T-cell (primary cell): ENCODE measurements at regions of chr17 and their contacts with region 1.

Region 1: DNA sequence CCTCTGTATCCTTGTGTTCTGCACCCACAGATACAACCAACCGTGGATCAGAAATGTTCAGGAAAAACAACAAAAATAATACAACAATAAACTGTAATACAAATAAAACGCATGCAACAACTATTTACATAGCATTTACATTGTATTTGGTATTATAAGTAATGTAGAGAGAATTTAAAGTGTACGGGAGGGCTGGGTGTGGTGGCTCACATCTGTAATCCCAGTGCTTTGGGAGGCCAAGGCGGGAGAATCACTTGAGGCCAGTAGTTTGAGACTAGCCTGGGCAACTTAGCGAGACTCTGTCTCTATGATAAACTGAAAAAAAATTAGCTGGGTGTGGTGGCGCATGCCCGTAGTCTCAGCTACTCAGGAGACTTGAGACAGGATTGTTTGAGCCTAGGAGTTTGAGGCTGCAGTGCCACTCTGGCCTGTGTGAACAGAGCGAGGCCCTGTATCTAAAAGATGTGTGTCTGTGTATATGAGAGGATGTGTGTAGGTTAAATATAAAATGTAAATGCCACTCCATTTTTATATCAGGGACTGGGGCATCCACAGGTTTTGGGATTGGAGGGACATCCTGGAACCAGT is 13.3 kb downstream of the SEC14L1 start:
- DNase-seq: no peak
- ATAC-seq: no peak
- H3K4me3 ChIP-seq: no peak overlapping the region
- H3K4me3 Mint-ChIP-seq: no peak overlapping the region
- H3K27ac ChIP-seq: no peak overlapping the region
- H3K27ac Mint-ChIP-seq: no peak overlapping the region
- H3K4me1 ChIP-seq: no peaks in the 10 kb centered on the region
- H3K4me1 Mint-ChIP-seq: peaks cover 56 to 59% (median 58%) of the 10 kb centered on the region in 3 donors
- H3K27me3 ChIP-seq: no peaks in the 10 kb centered on the region
- H3K27me3 Mint-ChIP-seq: no peaks in the 10 kb centered on the region

Region 2: DNA sequence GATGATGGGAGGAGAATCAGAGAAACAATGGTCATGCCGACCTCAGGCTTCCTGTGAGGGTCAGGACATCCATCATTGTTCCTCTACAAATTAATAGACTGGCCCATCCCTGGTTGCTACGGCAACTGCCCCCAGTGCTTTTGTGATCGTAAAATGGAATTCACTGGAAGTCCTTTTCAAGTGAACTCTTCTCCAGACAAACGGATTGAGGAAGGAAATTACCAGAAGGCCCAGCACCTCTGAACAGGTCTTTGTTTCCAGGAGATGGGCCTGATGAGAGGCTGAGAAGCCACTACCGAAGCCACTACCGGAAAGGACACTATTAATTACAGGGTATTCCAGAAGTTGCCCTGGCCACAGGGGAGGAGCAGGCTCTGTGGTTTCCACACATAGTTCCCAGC is 159.9 kb before region 1 on chr17:
- CTCF ChIA-PET with region 1: no interaction called
- POLR2A ChIA-PET with region 1: no interaction called
- DNase-seq: no peak
- ATAC-seq: no peak
- H3K4me3 ChIP-seq: peak overlapping the region in 1 of 2 donors; percentile 12
- H3K4me3 Mint-ChIP-seq: peak overlapping the region in 1 of 3 donors; percentile 31
- H3K27ac ChIP-seq: peak overlapping the region; percentile 32
- H3K27ac Mint-ChIP-seq: peak overlapping the region; percentile 88 to 89
- H3K4me1 ChIP-seq: peaks cover 31 to 55% of the 10 kb centered on the region in 2 experiments
- H3K4me1 Mint-ChIP-seq: peaks cover 50 to 56% (median 54%) of the 10 kb centered on the region in 3 donors
- H3K27me3 ChIP-seq: no peaks in the 10 kb centered on the region
- H3K27me3 Mint-ChIP-seq: no peaks in the 10 kb centered on the region

Region 3: DNA sequence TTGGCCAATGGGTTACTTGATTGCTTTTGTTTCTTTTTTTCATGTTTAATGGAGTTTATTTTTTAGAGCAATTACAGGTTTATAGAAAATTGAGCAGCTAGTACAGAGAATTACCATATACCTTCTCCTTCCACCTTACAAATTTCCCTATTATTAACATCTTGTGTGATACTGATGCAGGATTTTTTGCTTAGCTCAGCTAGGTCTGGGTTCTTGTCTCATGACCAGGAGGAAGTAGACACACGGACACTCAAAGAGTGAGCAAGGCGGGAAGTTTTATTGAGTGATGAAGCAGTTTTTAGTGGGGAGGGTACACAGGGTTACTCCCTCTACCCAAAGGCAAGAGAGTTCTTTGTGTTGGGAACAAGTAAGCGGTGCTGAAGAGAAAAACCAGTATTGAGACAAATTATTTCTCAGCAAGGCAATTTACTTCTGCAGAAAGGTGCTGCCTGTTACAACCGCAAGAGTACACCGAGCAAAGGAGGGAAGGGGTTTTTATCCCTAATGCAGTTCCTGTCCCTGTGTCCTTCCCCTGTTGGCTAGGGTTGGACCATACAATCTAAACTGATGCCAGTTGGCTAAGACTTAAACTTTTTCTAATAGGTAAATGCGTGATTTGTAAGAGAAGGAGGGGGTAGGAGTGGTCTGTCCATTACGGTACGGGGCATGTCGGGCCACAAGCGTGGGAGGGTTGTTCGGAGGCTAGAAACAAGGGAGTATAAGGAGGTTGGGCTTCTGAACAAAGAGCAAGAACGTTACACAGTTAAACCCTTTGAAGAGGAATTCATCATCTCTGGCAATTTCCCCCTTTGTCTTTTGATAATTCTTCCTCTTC is 13.6 kb after region 1 on chr17:
- CTCF ChIA-PET with region 1: no interaction called
- POLR2A ChIA-PET with region 1: interaction called in 1 of 2 experiments, 12 read pairs
- DNase-seq: no peak
- ATAC-seq: no peak
- H3K4me3 ChIP-seq: no peak overlapping the region
- H3K4me3 Mint-ChIP-seq: no peak overlapping the region
- H3K27ac ChIP-seq: no peak overlapping the region
- H3K27ac Mint-ChIP-seq: no peak overlapping the region
- H3K4me1 ChIP-seq: peaks cover 9 to 13% of the 10 kb centered on the region in 2 experiments
- H3K4me1 Mint-ChIP-seq: peaks cover 35 to 38% (median 36%) of the 10 kb centered on the region in 3 donors
- H3K27me3 ChIP-seq: no peaks in the 10 kb centered on the region
- H3K27me3 Mint-ChIP-seq: no peaks in the 10 kb centered on the region